ENCODE measurements at regions of chr22 and their contacts with region 1.

Region 1: DNA sequence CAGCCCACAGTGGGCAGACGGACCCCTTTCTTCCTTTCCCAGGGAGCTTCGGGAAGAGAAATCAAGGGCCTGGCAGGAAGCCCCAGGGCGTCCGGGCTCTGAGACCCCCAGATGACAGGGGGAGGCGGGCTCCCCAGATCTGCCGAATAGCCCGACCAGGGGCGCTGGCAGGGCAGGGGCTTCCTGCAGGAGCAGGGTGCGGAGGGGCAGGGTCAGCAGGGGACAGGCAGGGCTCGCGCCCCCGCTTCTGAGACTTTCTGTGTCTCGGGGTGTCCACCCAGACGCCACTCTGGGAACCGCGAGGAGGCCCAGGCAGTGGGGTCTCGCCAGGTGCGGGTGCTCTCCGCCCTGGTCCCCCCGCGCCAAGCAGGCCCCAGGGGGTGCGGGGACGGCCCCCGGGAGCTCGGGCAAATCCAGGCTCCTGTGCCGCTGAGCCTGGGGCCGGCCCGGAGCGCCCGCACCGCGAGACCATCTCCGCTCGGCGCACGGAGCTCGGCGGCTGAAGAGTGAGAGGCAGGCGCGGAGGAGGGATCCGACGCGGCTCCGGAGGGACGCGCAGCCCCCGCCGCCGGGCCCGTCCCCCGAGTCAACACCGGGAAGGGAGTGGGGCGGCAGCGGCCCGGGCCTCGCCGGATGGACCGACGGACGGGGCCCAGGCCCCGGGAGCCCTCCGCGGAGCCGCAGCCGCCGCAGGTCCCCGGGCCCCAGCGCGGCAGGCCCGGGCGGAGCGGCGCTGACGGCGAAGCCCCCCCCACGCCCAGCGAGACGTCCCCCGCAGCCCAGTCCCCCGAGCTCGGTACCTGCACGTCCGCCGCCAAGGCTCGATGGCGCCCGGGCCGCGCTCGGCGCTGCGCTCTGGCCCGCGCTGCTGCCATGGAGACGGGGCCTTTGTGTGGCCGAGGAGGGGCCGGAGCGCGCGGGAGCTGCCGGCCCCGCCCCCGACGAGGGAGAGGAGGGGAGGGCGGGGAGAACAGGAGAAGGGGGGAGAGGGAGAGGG is at the start of gene PLXNB2:
- DNase-seq: peak; percentile 62
- ATAC-seq: peak; percentile 42
- H3K4me3 ChIP-seq: peak within 1 kb of the TSS; percentile 7 to 58 (median 45)
- H3K4me3 Mint-ChIP-seq: peak within 1 kb of the TSS; percentile 84
- H3K27ac ChIP-seq: no peak within 1 kb of the TSS
- H3K27ac Mint-ChIP-seq: peak within 1 kb of the TSS; percentile 87
- H3K4me1 ChIP-seq: peaks cover 65 to 75% of the 10 kb centered on the region in 2 donors
- H3K4me1 Mint-ChIP-seq: peaks cover 44% of the 10 kb centered on the region
- H3K27me3 ChIP-seq: peaks cover 0 to 28% (median 7%) of the 10 kb centered on the region in 4 experiments
- H3K27me3 Mint-ChIP-seq: peaks cover 5% of the 10 kb centered on the region
- CTCF ChIP-seq: no peak
- total RNA-seq, gene PLXNB2: 30.3 and 31.4 TPM in 2 replicates

Region 2: GRCh38 chr22:50293441-50294318 is 13.4 kb before region 1 on chr22:
- CTCF ChIA-PET with region 1: interaction called, 5 read pairs
- POLR2A ChIA-PET with region 1: interaction called, 53 read pairs
- intact Hi-C with region 1: loop called (anchors 1 kb)
- DNase-seq: peak; percentile 73
- ATAC-seq: peak; percentile 58
- H3K4me3 ChIP-seq: peak overlapping the region in 1 of 5 experiments; percentile 33
- H3K4me3 Mint-ChIP-seq: peak overlapping the region; percentile 64
- H3K27ac ChIP-seq: no peak overlapping the region
- H3K27ac Mint-ChIP-seq: peak overlapping the region; percentile 46
- H3K4me1 ChIP-seq: peaks cover 37 to 44% of the 10 kb centered on the region in 2 donors
- H3K4me1 Mint-ChIP-seq: peaks cover 41% of the 10 kb centered on the region
- H3K27me3 ChIP-seq: peaks cover 0 to 32% (median 12%) of the 10 kb centered on the region in 4 experiments
- H3K27me3 Mint-ChIP-seq: peaks cover 17% of the 10 kb centered on the region
- CTCF ChIP-seq: no peak

Measured in B cell (primary cell).